ENCODE measurements at regions of chr11 and their contacts with region 1.

Region 1: GRCh38 chr11:117426269-117426685 is 98.6 kb downstream of the CEP164 start:
- DNase-seq: peak; percentile 70 to 97 (median 86)

Region 2: GRCh38 chr11:117807482-117808327 is 381.4 kb after region 1 on chr11:
- intact Hi-C with region 1: loop called (anchors 2 kb)
- DNase-seq: peak; percentile 63 to 96 (median 86)

Region 3: DNA sequence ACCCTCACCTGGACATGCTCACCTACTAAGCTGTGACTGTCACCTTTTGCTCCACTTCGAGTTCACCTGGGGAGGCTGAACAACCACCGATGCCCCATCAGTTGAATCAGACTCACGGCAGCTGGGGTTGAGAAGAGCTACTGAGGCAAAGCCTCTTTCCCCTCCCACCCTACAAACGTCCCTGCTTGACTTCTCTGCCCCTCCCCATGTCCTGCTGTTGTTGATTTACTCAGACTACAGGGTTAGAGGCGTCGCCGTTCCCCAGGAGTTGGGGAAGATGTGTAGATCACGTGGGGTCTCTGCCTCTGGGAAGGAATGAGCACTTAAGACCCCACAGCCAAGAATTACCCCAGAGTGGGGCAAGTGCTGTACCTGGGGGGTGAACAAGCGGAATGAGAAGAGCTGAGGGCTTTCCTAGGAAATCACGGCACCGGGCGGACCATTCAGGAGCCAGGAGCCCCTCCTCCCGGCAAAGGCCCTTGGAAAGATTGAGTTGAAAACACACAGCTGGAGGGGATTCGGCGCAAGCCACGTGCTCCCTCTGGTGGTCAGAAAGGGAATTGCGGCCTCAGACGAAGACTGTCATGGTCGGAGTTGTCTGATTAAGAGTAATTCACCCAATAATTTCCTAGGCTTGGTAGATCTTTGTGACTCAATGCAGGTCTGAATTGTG is 391.2 kb after region 1 on chr11:
- intact Hi-C with region 1: loop called (anchors 2 kb)
- DNase-seq: peak; percentile 81 to 98 (median 92)

Region 4: GRCh38 chr11:118046051-118046963 is 620.0 kb after region 1 on chr11:
- intact Hi-C with region 1: loop called (anchors 5 kb)
- DNase-seq: no peak

Measured in posterior cingulate gyrus (tissue), 11 donors.